Naive thymus-derived CD4-positive, alpha-beta T cell (primary cell): ENCODE measurements at regions of chr1 and their contacts with region 1.

Region 1: GRCh38 chr1:181424786-181425403 is 58.4 kb upstream of the CACNA1E start:
- DNase-seq: peak; percentile 45 to 82 (median 76)
- ATAC-seq: peak; percentile 86
- H3K4me3 ChIP-seq: peak overlapping the region; percentile 26
- H3K4me3 Mint-ChIP-seq: peak overlapping the region; percentile 59 to 86 (median 74)
- H3K27ac ChIP-seq: no peak overlapping the region
- H3K27ac Mint-ChIP-seq: peak overlapping the region in 8 of 9 donors; percentile 16 to 86 (median 58)
- H3K4me1 ChIP-seq: peaks cover 3 to 16% of the 10 kb centered on the region in 2 donors
- H3K4me1 Mint-ChIP-seq: peaks cover 0 to 12% (median 10%) of the 10 kb centered on the region in 7 donors
- H3K27me3 ChIP-seq: no peaks in the 10 kb centered on the region
- H3K27me3 Mint-ChIP-seq: peaks cover 17 to 29% (median 22%) of the 10 kb centered on the region in 5 donors

Region 2: DNA sequence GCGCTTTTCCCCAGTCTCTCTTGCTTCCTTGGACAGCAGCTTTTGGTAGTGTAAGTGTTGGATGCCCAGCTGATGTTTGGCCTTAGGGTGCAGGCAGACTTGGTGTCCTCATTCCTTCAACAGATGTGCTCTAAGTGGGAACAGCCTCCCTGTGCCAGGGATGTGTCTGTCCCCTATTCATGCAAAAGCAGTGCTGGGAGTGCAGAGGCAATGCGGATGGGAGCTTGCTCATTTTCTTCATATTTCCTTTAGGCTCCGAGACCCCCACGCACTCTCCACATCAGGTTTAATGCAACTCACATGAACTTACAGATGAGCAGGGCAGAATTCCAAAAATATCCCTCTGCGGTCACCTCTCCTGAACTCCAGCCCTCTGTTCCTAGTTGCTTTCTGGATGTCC is 240.3 kb before region 1 on chr1:
- CTCF ChIA-PET with region 1: interaction called, 90 read pairs
- POLR2A ChIA-PET with region 1: interaction called, 8 read pairs
- intact Hi-C with region 1: no loop called
- DNase-seq: no peak
- ATAC-seq: no peak
- H3K4me3 ChIP-seq: no peak overlapping the region
- H3K4me3 Mint-ChIP-seq: no peak overlapping the region
- H3K27ac ChIP-seq: no peak overlapping the region
- H3K27ac Mint-ChIP-seq: no peak overlapping the region
- H3K4me1 ChIP-seq: peaks cover 0 to 13% of the 10 kb centered on the region in 2 donors
- H3K4me1 Mint-ChIP-seq: peaks cover 8 to 13% (median 11%) of the 10 kb centered on the region in 7 donors
- H3K27me3 ChIP-seq: no peaks in the 10 kb centered on the region
- H3K27me3 Mint-ChIP-seq: peaks cover 0 to 45% (median 4%) of the 10 kb centered on the region in 5 donors

Region 3: DNA sequence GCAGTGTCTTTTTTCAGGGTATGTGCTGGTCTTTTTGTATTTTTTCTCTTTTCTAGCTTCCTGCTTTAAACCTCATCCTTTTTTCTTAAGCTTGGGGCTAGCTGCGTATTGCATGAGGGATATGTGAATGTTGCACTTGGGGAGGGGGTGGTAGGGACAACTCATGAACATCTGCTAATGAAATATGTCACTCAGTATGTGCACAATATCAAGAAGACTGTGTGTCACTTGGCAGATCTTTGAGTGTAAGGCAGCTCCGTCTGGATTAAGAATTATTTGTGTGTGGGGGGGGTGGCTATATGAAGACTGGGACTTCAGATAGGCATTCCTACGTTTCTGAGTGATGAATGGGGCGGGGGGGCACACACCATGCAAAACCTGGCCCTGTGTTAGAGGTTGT is 111.9 kb before region 1 on chr1:
- CTCF ChIA-PET with region 1: interaction called, 5 read pairs
- POLR2A ChIA-PET with region 1: no interaction called
- intact Hi-C with region 1: loop called (anchors 1 to 5 kb)
- DNase-seq: no peak
- ATAC-seq: no peak
- H3K4me3 ChIP-seq: no peak overlapping the region
- H3K4me3 Mint-ChIP-seq: no peak overlapping the region
- H3K27ac ChIP-seq: no peak overlapping the region
- H3K27ac Mint-ChIP-seq: no peak overlapping the region
- H3K4me1 ChIP-seq: peaks cover 0 to 2% of the 10 kb centered on the region in 2 donors
- H3K4me1 Mint-ChIP-seq: peaks cover 10 to 27% (median 16%) of the 10 kb centered on the region in 7 donors
- H3K27me3 ChIP-seq: peaks cover 0 to 24% of the 10 kb centered on the region in 2 donors
- H3K27me3 Mint-ChIP-seq: peaks cover 45 to 58% (median 48%) of the 10 kb centered on the region in 5 donors

Region 4: GRCh38 chr1:181324797-181325616 is 99.9 kb before region 1 on chr1:
- CTCF ChIA-PET with region 1: interaction called, 3 read pairs
- POLR2A ChIA-PET with region 1: no interaction called
- intact Hi-C with region 1: loop called in 1 of 2 experiments (anchors 2 kb)
- DNase-seq: peak in 1 of 9 donors; percentile 33
- ATAC-seq: peak; percentile 31
- H3K4me3 ChIP-seq: no peak overlapping the region
- H3K4me3 Mint-ChIP-seq: no peak overlapping the region
- H3K27ac ChIP-seq: no peak overlapping the region
- H3K27ac Mint-ChIP-seq: peak overlapping the region in 1 of 9 donors; percentile 65
- H3K4me1 ChIP-seq: no peaks in the 10 kb centered on the region
- H3K4me1 Mint-ChIP-seq: peaks cover 3 to 15% (median 7%) of the 10 kb centered on the region in 7 donors
- H3K27me3 ChIP-seq: no peaks in the 10 kb centered on the region
- H3K27me3 Mint-ChIP-seq: peaks cover 0 to 16% (median 1%) of the 10 kb centered on the region in 5 donors

Region 5: DNA sequence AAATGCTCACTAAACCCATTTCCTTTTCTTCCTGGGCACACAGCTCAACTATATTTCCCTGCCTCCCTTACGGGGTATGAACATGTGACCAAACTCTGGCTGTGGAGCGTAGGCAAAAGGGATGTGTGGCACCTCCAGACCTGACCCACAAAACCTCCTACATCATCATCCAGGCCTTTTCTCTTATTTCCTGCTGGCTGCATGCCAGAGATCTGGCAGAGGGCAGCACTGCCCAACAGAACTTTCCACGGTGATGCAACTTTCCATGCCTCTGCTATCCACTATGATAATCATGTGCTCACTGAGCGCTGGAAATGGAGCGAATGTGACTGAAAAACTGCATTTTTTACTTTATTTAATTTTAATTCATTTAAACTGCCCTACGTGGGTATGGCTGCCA is 41.2 kb before region 1 on chr1:
- CTCF ChIA-PET with region 1: interaction called, 6 read pairs
- POLR2A ChIA-PET with region 1: no interaction called
- intact Hi-C with region 1: loop called (anchors 5 kb)
- DNase-seq: no peak
- ATAC-seq: no peak
- H3K4me3 ChIP-seq: no peak overlapping the region
- H3K4me3 Mint-ChIP-seq: no peak overlapping the region
- H3K27ac ChIP-seq: no peak overlapping the region
- H3K27ac Mint-ChIP-seq: no peak overlapping the region
- H3K4me1 ChIP-seq: no peaks in the 10 kb centered on the region
- H3K4me1 Mint-ChIP-seq: peaks cover 0 to 8% (median 2%) of the 10 kb centered on the region in 7 donors
- H3K27me3 ChIP-seq: no peaks in the 10 kb centered on the region
- H3K27me3 Mint-ChIP-seq: peaks cover 0 to 19% (median 0%) of the 10 kb centered on the region in 5 donors